ENCODE measurements at regions of chr20 and their contacts with region 1.

Region 1: DNA sequence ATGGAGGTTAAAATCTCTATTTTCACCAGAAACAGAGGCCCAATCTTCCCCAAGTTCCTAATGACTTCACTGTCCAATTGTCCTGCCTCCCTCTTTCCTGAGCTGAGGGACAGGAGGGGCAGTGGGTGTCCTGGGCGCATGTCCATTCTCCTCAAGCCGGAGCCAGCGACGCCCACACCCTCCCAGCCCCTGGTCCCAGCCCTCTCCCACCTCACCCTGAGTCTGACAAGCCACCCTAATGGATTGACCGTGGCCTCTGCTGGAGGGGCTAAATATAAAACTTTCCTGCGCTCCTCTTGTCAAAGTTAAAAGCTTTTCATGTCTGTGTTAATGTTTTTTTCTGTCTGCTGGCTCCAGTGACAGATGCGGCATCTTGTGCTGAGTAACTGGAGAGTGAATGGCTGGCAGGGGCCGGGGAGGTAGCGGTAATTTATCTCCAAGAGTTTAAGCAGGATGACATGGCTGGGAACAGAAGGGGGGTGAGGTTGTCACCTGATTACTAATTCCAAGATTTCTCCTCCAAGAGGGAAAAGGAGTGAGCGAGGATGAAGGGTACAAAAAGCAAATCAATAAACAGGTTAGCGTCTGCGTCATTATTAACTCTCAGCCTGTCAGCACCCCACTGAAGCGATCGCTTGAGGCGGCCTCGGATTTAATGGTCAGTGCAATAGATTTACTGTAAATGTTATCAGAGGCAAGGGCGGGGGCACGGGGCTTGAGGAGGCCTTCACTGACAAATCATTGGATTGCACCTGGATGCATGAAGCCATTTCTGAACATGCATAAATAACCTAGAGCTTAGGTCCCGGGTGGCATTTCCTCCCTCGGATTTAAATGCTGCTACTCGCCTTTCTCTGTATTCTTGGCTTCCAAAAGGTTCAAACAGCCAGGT is 118.1 kb upstream of the MAFB start:
- DNase-seq: no peak
- H3K4me3 ChIP-seq: no peak overlapping the region
- H3K27ac ChIP-seq: no peak overlapping the region
- H3K4me1 ChIP-seq: no peaks in the 10 kb centered on the region
- H3K27me3 ChIP-seq: no peaks in the 10 kb centered on the region
- CTCF ChIP-seq: no peak

Region 2: DNA sequence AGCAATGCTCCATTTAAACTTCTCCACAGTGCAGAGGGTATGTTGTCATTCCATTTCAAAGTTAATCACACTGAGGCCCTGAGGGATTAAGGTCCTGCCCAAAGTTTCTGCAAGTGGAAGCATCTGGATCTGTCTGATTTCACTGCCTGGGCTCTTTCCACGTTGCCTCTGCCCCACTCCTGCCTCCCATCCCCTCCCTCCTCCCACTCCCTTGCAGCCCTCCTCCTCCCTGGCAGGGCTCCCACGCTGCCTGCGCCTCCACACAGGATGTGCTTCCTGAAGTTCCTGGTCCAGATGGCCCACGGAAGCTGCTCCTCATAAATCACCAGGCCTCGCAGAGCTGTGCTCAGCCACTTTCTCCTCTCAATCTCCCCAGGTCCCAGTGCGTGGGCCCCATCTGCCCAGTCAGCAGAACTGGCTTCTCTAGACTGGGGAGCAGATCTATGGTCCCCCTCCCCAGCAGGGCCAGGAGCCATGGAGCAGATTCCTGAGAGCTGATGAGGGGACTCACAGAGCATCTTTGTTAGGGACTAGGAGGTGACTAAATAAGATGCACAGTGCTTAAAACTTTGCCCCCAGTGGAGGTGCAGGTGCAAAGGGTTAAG is 52.7 kb before region 1 on chr20:
- CTCF ChIA-PET with region 1: no interaction called
- dilution Hi-C with region 1: loop called (anchors 5 kb)
- in situ Hi-C with region 1: no loop called
- intact Hi-C with region 1: no loop called
- DNase-seq: no peak
- H3K4me3 ChIP-seq: no peak overlapping the region
- H3K27ac ChIP-seq: no peak overlapping the region
- H3K4me1 ChIP-seq: peaks cover 7% of the 10 kb centered on the region
- H3K27me3 ChIP-seq: no peaks in the 10 kb centered on the region
- CTCF ChIP-seq: no peak

Region 3: DNA sequence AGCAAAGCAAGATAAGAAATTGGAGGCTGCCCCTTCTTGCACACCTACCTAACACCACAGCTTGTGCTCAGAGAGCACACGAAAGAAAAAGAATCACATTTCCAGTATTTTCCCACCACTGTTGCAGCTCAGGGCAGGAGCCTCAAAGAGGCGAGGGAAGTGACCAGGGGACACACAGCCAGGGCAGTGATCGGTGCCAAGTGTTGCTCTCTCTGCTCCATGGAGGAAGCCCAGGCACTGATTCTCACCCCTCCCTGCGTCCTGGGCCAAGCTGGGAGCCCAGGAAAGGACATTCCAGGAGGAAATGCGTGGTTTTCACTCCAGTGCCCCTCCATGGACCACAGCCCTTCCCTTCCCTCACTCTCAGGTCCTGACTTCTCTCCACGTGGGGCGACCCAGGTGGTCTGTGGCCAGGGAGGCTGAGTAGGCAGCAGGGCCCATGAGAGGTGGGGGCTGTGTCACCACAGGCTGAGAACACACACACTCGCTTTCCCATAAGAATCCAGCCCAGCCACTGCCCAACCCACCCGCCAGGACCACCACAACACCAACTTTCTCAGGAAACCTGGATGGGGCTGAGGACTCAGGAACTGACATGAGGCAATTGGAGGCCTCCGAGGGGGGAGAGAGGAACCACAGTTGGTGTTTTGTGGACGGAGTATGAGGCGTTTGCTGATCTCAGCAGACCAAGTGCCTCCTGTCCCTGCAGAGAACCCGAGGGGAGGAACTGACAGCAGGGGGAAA is 36.4 kb before region 1 on chr20:
- CTCF ChIA-PET with region 1: no interaction called
- dilution Hi-C with region 1: no loop called
- in situ Hi-C with region 1: no loop called
- intact Hi-C with region 1: no loop called
- DNase-seq: no peak
- H3K4me3 ChIP-seq: no peak overlapping the region
- H3K27ac ChIP-seq: no peak overlapping the region
- H3K4me1 ChIP-seq: no peaks in the 10 kb centered on the region
- H3K27me3 ChIP-seq: no peaks in the 10 kb centered on the region
- CTCF ChIP-seq: no peak

Region 4: DNA sequence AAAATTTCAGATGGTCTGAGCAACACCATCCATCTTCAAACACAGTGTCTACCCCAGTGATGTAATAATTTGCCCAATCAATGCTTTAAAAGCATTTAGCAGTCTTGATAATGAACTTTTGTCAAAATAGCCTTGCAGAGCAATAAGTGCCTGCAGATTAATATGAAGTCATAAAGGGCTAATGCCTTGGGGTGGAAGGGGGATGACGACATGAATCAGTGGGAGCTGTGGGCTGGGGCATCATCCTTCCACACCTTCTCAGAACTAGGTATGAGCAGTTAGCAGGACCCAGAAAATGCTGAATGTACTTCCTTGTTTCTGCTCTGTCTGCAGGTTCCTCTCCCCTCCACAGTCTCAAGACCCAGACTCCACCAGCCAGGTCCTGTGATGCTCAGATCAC is 48.1 kb after region 1 on chr20:
- CTCF ChIA-PET with region 1: no interaction called
- dilution Hi-C with region 1: loop called (anchors 5 kb)
- in situ Hi-C with region 1: no loop called
- intact Hi-C with region 1: no loop called
- DNase-seq: no peak
- H3K4me3 ChIP-seq: no peak overlapping the region
- H3K27ac ChIP-seq: no peak overlapping the region
- H3K4me1 ChIP-seq: no peaks in the 10 kb centered on the region
- H3K27me3 ChIP-seq: no peaks in the 10 kb centered on the region
- CTCF ChIP-seq: no peak

Region 5: GRCh38 chr20:41553142-41553880 is 746.1 kb after region 1 on chr20:
- CTCF ChIA-PET with region 1: no interaction called
- dilution Hi-C with region 1: no loop called
- in situ Hi-C with region 1: no loop called
- intact Hi-C with region 1: no loop called
- DNase-seq: no peak
- H3K4me3 ChIP-seq: no peak overlapping the region
- H3K27ac ChIP-seq: no peak overlapping the region
- H3K4me1 ChIP-seq: no peaks in the 10 kb centered on the region
- H3K27me3 ChIP-seq: no peaks in the 10 kb centered on the region
- CTCF ChIP-seq: no peak